ENCODE measurements at regions of chr22 and their contacts with region 1.

Region 1: DNA sequence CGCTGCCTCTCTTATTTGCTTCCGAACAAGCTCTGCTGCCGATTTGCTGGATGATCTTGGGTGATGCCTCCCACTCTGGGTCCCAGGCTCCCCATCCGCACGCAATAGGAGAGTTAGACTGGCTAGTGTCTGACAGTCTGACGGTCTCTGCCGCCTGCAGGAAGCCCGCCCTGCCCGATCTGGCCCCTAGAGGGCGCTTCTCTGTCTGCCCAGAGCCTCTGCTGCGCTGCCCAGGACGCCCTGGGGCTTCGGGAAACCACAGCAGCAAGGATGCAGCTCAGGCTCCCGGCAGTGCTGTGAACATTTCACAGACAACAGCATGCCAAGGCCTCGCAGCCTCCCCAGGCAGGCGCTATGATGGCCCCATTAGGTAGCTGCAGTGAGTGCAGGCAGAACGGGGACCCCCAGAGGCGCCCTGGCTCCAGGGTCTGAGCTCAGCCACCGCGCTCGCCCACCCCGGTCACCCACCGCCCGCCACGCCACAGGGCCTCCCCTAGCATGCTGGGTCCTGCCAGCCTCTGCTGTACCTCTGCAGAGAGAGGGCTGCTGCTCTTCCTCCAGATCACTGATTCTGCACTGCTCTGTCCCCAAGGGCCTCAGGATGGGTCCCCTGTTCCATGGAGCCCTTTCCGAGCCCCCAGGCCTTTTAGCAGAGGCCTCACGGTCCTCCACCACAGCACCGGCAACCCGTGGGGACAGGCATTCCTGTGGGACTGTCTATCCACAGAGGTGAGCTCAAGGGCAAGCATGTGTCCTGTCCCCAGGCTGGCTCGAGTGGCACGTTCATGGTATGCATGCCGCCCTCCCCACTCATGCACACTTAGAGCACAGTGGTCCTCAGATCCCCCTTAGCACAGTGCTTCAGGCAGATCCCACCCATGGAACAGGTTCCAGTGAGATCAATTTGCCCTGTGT is 4.3 kb upstream of the BAIAP2L2 start:
- DNase-seq: peak; percentile 86 to 92 (median 87)
- ATAC-seq: peak; percentile 84 to 95 (median 94)
- H3K4me3 ChIP-seq: no peak overlapping the region
- H3K27ac ChIP-seq: no peak overlapping the region
- H3K4me1 ChIP-seq: peaks cover 0 to 11% (median 6%) of the 10 kb centered on the region in 12 donors
- H3K27me3 ChIP-seq: no peaks in the 10 kb centered on the region
- CTCF ChIP-seq: peak; percentile 91 to 98 (median 95)
- POLR2A ChIP-seq: no peak

Region 2: GRCh38 chr22:38088629-38089473 is 25.9 kb before region 1 on chr22:
- intact Hi-C with region 1: loop called in 1 of 10 experiments (anchors 1 kb)
- DNase-seq: no peak
- ATAC-seq: peak in 3 of 4 donors; percentile 40 to 61 (median 45)
- H3K4me3 ChIP-seq: peak overlapping the region in 10 of 12 donors; percentile 18 to 45 (median 36)
- H3K27ac ChIP-seq: no peak overlapping the region
- H3K4me1 ChIP-seq: peaks cover 0 to 13% (median 5%) of the 10 kb centered on the region in 12 donors
- H3K27me3 ChIP-seq: peaks cover 0 to 19% (median 5%) of the 10 kb centered on the region in 9 donors
- CTCF ChIP-seq: no peak
- POLR2A ChIP-seq: no peak

Region 3: DNA sequence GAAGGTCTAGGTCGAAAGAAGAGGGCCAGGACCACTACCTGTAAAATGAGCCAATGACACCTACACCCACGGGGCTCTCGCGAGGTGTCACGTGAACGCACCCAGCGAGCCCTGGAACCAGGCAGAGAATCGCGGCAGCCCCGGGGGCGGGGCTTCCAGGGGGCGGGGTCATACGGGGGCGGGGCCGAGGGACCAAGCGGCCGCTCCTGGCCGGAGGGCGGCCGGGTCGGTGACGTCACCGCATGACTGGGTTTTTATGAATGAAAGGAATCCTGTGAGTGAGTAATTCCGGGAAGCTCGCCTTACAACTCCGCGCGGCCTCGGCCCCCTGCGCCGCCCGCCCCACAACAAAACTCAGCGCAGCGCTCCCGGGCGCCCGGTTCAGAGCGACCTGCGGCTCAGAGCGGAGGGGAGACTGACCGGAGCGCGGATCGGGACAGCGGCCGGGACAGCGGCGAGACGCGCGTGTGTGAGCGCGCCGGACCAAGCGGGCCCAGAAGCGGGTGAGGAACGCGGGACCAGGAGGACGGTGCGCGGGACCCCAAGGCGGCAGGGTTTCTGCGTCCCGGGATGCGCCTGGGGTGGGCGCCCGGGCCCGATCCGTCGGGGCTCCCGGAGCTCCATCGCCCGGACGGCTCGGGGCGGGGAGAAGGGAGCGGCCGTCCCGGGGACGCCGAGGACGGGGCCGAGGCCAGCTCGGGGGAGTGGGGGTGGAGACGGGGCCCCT is 87.1 kb after region 1 on chr22 and contains the start of gene MAFF:
- intact Hi-C with region 1: loop called in 4 of 10 experiments (anchors 5 to 10 kb)
- DNase-seq: peak; percentile 96 to 98 (median 97)
- ATAC-seq: peak; percentile 69 to 88 (median 86)
- H3K4me3 ChIP-seq: peak within 1 kb of the TSS; percentile 73 to 98 (median 80)
- H3K27ac ChIP-seq: peak within 1 kb of the TSS; percentile 95 to 100 (median 98)
- H3K4me1 ChIP-seq: peaks cover 6 to 37% (median 26%) of the 10 kb centered on the region in 12 donors
- H3K27me3 ChIP-seq: no peaks in the 10 kb centered on the region
- CTCF ChIP-seq: no peak
- POLR2A ChIP-seq: peak; percentile 88 to 94
- total RNA-seq, gene MAFF: 1.9 to 35.8 (median 4.0) TPM

Region 4: GRCh38 chr22:38230108-38230825 is 115.5 kb after region 1 on chr22:
- intact Hi-C with region 1: loop called in 4 of 10 experiments (anchors 1 to 10 kb)
- DNase-seq: peak in 1 of 5 donors; percentile 50
- ATAC-seq: peak in 2 of 4 donors; percentile 16 to 22
- H3K4me3 ChIP-seq: no peak overlapping the region
- H3K27ac ChIP-seq: peak overlapping the region in 10 of 12 donors; percentile 8 to 70 (median 56)
- H3K4me1 ChIP-seq: peaks cover 0 to 51% (median 22%) of the 10 kb centered on the region in 12 donors
- H3K27me3 ChIP-seq: no peaks in the 10 kb centered on the region
- CTCF ChIP-seq: peak in 10 of 12 donors; percentile 25 to 53 (median 41)
- POLR2A ChIP-seq: no peak

Region 5: DNA sequence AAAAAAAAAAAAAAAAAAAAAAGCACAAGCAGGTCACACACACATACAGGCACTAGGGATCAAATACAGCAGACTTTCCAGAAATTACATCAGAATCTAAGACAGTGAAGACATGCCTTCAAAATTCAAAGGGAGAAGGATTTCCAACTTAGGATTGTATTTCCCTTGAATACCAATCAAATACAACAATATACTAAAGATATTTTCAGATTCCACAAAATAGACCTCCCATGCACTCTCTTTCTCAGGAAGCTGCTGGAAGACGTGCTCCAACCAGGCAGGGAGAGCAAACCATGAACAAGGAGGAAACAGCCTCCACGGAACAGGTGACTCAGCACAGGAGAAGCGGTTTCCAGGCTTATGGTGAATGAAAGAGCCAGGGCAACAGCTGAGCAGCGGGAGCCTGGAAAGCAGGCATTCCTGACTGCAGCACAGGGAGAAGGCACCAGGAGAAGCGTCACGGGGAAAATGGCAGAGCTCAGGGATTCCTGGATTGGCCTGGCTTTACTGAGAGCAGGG is 126.1 kb after region 1 on chr22:
- intact Hi-C with region 1: loop called in 2 of 10 experiments (anchors 10 kb)
- DNase-seq: no peak
- ATAC-seq: peak in 1 of 4 donors; percentile 31
- H3K4me3 ChIP-seq: no peak overlapping the region
- H3K27ac ChIP-seq: peak overlapping the region in 1 of 12 donors; percentile 11
- H3K4me1 ChIP-seq: peaks cover 3 to 64% (median 34%) of the 10 kb centered on the region in 12 donors
- H3K27me3 ChIP-seq: no peaks in the 10 kb centered on the region
- CTCF ChIP-seq: no peak
- POLR2A ChIP-seq: no peak

Region 6: DNA sequence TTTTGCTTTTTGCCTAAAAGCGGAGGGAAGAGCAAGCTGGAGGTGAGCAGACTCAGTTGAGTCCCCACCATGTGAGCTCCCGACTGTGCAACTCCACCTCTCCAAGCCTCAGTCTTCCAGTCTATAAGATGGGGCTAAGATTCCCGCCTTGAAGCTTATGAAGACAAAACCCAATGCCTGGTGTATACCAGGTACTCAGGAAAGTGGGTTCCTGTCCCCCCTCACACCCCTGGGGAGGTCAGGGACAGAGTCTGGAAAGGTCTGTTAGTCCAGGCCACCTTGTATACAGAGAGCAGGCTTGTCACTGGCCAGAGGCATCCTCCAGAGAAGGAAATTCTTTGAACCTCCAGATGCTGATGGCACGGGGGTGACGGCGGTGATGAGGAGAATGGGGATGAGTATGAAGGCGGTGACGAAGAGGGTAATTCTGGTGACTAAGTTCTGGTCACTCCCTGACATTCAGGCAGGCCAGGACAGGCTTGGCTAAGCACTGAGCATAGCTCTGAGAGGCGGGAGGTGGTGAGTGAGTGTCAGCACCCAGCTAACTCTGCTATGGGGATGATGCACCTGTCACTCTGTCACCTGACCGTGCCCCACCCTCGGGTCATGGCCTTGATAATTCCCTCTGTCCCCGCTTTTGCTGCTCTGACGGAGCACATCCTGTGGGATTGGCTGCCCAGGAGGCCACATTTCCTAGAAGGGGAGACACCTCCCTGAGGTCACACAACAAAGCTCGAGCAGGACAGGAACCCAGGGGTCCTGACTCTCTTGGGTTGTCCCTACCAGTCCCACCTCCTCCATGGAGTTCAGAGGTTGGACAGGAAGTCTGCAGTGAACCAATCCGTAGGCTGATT is 233.4 kb after region 1 on chr22:
- intact Hi-C with region 1: loop called in 4 of 10 experiments (anchors 1 to 10 kb)
- DNase-seq: peak in 1 of 5 donors; percentile 48
- ATAC-seq: peak in 2 of 4 donors; percentile 16 to 17
- H3K4me3 ChIP-seq: no peak overlapping the region
- H3K27ac ChIP-seq: no peak overlapping the region
- H3K4me1 ChIP-seq: peaks cover 0 to 7% (median 1%) of the 10 kb centered on the region in 12 donors
- H3K27me3 ChIP-seq: peaks cover 0 to 18% (median 0%) of the 10 kb centered on the region in 9 donors
- CTCF ChIP-seq: no peak
- POLR2A ChIP-seq: no peak

Region 7: GRCh38 chr22:38353142-38353629 is 238.4 kb after region 1 on chr22:
- intact Hi-C with region 1: loop called in 4 of 10 experiments (anchors 1 to 10 kb)
- DNase-seq: peak; percentile 63 to 88 (median 69)
- ATAC-seq: peak in 3 of 4 donors; percentile 65 to 81 (median 81)
- H3K4me3 ChIP-seq: no peak overlapping the region
- H3K27ac ChIP-seq: peak overlapping the region in 4 of 12 donors; percentile 21 to 60 (median 24)
- H3K4me1 ChIP-seq: peaks cover 0 to 11% (median 4%) of the 10 kb centered on the region in 12 donors
- H3K27me3 ChIP-seq: no peaks in the 10 kb centered on the region
- CTCF ChIP-seq: peak; percentile 97 to 100 (median 99)
- POLR2A ChIP-seq: no peak

Region 8: DNA sequence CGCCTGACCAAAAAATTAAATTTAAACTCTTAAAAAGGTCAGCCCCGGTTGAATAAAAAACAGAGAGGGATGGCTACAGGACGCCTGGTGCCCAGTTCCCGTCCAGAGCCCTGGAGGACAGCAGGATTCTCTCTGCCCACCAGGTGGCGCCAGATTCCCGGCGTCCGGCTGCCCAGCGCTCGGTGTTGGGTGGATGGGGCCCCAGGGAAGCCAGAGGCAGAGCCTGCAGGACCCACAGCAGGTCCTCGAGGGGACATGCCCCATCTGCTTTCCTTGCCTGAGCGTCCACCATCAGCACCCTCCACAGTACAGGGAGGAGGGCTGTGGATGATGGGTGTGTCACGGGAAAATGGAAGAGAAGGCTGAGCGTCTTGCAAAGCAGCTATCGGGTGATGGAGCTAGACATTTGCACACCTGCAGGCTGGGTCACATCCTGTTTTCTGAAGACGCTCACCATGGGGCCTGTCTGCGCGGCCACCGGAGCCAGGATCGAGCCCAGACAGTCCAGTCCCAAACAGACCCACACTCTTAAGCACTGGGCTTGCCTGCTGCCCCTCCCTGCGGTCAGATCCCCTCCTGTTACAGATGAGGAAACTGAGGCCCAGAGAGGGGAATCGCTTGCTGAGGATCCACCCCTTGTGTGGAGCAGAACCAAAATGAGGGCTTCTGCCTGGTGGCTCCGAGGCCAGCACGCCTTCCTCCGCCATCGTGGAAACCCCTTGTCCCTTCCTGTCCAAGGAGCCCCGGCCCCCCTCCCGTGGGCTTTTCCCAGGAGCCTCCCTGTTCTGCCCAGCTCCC is 1056.3 kb after region 1 on chr22:
- intact Hi-C with region 1: no loop called
- DNase-seq: peak; percentile 81 to 93 (median 84)
- ATAC-seq: peak; percentile 76 to 87 (median 83)
- H3K4me3 ChIP-seq: peak overlapping the region in 4 of 12 donors; percentile 1 to 18 (median 10)
- H3K27ac ChIP-seq: peak overlapping the region in 3 of 12 donors; percentile 25 to 42 (median 40)
- H3K4me1 ChIP-seq: peaks cover 33 to 56% (median 47%) of the 10 kb centered on the region in 12 donors
- H3K27me3 ChIP-seq: no peaks in the 10 kb centered on the region
- CTCF ChIP-seq: peak; percentile 94 to 99 (median 96)
- POLR2A ChIP-seq: no peak

Measured in heart left ventricle (tissue), 16 donors.